Left ventricle myocardium superior (tissue), 1 donor: ENCODE measurements at regions of chr13 and their contacts with region 1.

Region 1: DNA sequence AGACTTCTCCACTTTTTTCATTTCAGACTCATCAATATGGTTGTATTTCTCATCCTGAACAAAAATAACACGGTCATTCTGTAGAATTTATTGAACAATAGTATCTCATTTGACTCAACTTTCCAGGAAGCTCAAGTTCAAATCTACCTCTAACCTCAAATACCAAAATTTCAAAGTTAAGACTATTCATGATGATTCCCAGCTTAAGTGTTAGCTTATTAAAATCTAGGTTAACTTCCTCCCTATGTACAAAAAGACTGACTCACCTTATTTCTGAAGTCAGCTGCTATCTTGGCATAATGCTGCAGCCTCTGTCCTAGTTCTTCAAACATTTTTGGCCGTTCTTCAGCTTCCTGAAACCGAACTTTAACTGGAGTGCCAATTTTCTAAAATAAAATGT is 23.2 kb downstream of the HSPH1 start:
- DNase-seq: no peak
- ATAC-seq: no peak

Region 2: GRCh38 chr13:30845297-30846214 is 293.0 kb before region 1 on chr13:
- intact Hi-C with region 1: no loop called
- DNase-seq: no peak
- ATAC-seq: no peak

Region 3: DNA sequence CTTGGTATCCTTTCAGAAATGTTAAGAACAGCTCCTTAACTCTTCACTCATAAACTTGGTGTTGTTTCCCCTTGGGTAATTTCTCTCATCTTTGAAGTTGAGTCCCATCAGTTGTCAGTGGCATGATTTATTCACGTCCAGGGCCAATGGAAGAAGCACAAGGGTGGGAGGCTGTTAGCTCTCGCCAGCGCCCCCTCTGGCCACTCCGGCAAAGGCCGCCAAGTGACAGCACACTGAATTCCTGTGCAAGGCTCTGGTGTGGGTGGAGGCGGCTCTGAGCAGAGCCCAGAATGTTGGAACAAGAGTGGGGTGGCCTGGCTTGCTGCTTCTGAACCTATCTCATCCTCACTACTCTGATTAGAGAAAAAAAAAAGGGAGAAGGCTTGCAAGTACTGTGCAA is 245.5 kb before region 1 on chr13:
- intact Hi-C with region 1: loop called (anchors 5 kb)
- DNase-seq: peak; percentile 61
- ATAC-seq: peak; percentile 57

Region 4: DNA sequence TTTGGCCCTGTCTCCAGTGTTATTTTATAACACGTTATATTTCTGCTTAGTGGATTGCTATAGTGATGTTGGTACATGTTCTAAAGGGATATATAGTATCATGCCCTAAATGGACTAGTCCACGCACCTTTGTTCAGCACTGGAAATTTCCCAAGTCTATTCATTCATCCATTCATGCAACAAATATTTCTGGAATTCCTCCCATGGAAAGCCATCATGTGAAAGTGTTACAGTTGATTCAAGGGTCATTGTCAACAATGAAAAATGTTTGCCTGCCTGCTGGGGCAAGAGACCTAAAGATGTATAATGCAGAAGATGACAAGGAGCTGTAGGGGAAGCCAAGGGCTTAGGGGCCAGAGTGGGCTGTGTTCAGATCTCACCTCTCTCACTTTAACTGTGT is 34.0 kb after region 1 on chr13:
- intact Hi-C with region 1: no loop called
- DNase-seq: no peak
- ATAC-seq: no peak